Heart left ventricle (tissue), 16 donors: ENCODE measurements at regions of chr3 and their contacts with region 1.

Region 1: GRCh38 chr3:34260271-34261006 is 462.0 kb downstream of the PDCD6IP start:
- DNase-seq: peak in 4 of 5 donors; percentile 30 to 60 (median 40)
- ATAC-seq: peak in 2 of 4 donors; percentile 44 to 52
- H3K4me3 ChIP-seq: no peak overlapping the region
- H3K27ac ChIP-seq: peak overlapping the region in 1 of 12 donors; percentile 44
- H3K4me1 ChIP-seq: peaks cover 0 to 41% (median 9%) of the 10 kb centered on the region in 12 donors
- H3K27me3 ChIP-seq: no peaks in the 10 kb centered on the region
- CTCF ChIP-seq: peak; percentile 41 to 77 (median 62)
- POLR2A ChIP-seq: no peak

Region 2: GRCh38 chr3:33883538-33883950 is 376.9 kb before region 1 on chr3:
- intact Hi-C with region 1: loop called in 2 of 10 experiments (anchors 10 kb)
- DNase-seq: no peak
- ATAC-seq: peak in 2 of 4 donors; percentile 24 to 46
- H3K4me3 ChIP-seq: peak overlapping the region in 9 of 12 donors; percentile 0 to 40 (median 25)
- H3K27ac ChIP-seq: no peak overlapping the region
- H3K4me1 ChIP-seq: peaks cover 0 to 12% (median 6%) of the 10 kb centered on the region in 12 donors
- H3K27me3 ChIP-seq: no peaks in the 10 kb centered on the region
- CTCF ChIP-seq: peak; percentile 83 to 93 (median 88)
- POLR2A ChIP-seq: no peak